Body of pancreas (tissue), 4 donors: ENCODE measurements at regions of chr2 and their contacts with region 1.

Region 1: GRCh38 chr2:201396595-201396994 is 39.5 kb upstream of the FLACC1 start:
- DNase-seq: no peak
- ATAC-seq: no peak
- H3K4me3 ChIP-seq: no peak overlapping the region
- H3K27ac ChIP-seq: no peak overlapping the region
- H3K4me1 ChIP-seq: peaks cover 5% of the 10 kb centered on the region
- H3K27me3 ChIP-seq: no peaks in the 10 kb centered on the region
- CTCF ChIP-seq: no peak
- POLR2A ChIP-seq: no peak

Region 2: GRCh38 chr2:201451292-201452057 is 54.9 kb after region 1 on chr2 and contains the starts of genes STRADB and TRAK2:
- intact Hi-C with region 1: loop called (anchors 10 kb)
- DNase-seq: peak; percentile 92 to 96 (median 93)
- ATAC-seq: peak; percentile 96
- H3K4me3 ChIP-seq: peak within 1 kb of the TSS; percentile 84 to 92
- H3K27ac ChIP-seq: peak within 1 kb of the TSS; percentile 87 to 91 (median 90)
- H3K4me1 ChIP-seq: peaks cover 53% of the 10 kb centered on the region
- H3K27me3 ChIP-seq: no peaks in the 10 kb centered on the region
- CTCF ChIP-seq: peak in 5 of 7 experiments; percentile 20 to 59 (median 50)
- POLR2A ChIP-seq: peak; percentile 60 to 89 (median 85)
- total RNA-seq, gene STRADB: 21.0 to 24.7 TPM
- total RNA-seq, gene TRAK2: 13.8 to 24.9 TPM

Region 3: GRCh38 chr2:201580486-201580885 is 183.9 kb after region 1 on chr2:
- intact Hi-C with region 1: no loop called
- DNase-seq: no peak
- ATAC-seq: no peak
- H3K4me3 ChIP-seq: no peak overlapping the region
- H3K27ac ChIP-seq: no peak overlapping the region
- H3K4me1 ChIP-seq: no peaks in the 10 kb centered on the region
- H3K27me3 ChIP-seq: no peaks in the 10 kb centered on the region
- CTCF ChIP-seq: no peak
- POLR2A ChIP-seq: no peak